ENCODE measurements at regions of chr10 and their contacts with region 1.

Region 1: DNA sequence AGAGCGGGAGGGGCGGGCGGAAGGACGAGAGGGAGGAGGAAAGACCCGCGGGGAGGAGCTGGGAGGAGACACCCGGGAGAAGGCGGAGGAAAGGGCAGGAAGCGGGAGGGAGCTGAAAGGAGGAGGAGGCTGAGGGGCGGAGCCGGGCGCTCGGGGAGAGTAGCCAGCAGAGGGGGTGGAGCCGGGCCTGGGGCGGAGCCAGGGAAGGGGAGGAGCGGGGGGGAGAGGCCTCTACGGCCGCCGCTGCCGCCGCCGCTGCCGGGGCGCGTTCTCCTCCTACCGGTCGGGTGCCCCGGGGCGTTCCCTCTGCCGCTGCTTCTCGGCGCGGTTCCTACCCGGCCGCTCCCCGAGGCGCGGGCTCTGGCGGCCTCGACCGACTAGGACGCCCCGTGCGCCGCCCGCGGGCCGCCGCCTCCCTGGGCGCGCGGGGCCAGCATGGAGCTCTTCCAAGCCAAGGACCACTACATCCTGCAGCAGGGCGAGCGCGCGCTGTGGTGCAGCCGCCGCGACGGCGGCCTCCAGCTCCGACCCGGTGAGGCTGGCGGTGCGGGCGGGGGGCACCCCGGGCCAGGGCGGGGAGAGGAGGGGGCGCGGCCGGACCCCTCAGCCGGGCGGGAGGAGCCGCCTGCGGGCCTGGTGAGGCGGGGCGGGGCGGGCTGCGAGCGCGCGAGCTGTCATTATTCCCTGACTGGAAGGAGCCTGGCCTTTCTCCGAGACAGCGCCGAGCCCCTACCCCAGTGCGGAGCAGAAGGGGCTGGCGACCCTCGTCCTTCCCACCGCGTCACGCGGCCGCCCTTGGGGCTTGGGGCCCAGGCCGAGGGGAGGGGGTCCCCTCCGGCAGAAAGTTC is at the start of gene INPP5F:
- DNase-seq: peak; percentile 96 to 100 (median 99)
- ATAC-seq: peak; percentile 91
- H3K4me3 ChIP-seq: peak within 1 kb of the TSS; percentile 79
- H3K4me3 Mint-ChIP-seq: peak within 1 kb of the TSS; percentile 88
- H3K27ac ChIP-seq: peak within 1 kb of the TSS; percentile 53 to 59
- H3K27ac Mint-ChIP-seq: peak within 1 kb of the TSS; percentile 77
- H3K4me1 ChIP-seq: peaks cover 22% of the 10 kb centered on the region
- H3K4me1 Mint-ChIP-seq: peaks cover 30% of the 10 kb centered on the region
- H3K27me3 ChIP-seq: no peaks in the 10 kb centered on the region
- H3K27me3 Mint-ChIP-seq: no peaks in the 10 kb centered on the region
- CTCF ChIP-seq: peak; percentile 17
- total RNA-seq, gene INPP5F: 6.2 to 6.4 TPM

Region 2: DNA sequence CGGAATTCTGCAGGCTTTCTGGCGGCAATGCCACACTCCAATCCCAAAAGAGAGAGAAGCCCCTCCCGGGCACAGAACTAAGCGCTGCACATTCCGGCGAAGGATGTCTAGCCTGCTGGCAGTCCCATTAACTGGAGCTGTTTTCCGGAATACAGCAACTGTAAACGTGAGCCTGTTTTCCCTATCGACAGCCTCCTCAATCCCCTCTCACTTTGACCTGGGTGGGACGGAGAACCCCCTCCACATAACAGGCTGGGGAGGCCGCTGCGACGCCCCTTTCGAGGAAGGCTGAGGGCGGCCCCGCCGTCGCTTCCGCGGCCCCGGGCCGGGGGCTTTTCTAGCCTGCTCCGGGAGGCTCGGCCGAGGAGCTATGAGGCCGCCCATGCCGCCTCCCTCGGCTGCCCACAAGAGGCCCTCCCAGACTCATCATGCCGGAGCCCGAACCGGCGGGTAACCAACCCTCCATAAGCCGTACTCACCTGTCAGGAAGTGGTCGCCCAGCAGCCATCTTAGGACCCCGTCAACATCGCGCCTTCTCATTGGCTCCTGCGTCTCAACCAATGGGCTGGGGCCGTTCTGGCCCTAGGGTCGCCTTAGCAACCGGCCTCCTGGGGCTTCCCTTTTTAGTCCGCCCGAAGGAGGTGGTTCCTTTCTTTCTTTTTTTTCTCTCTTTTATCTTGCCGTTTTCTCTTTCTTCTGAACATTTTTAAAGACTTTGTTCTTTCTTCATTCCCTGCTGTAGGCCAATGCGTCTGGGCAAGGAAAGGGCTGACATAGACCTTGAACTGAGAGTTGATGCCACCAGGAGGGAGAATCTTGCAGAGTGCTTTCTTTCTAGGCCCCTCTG is 1384.0 kb before region 1 on chr10 and contains the start of gene FAM204A:
- CTCF ChIA-PET with region 1: no interaction called
- POLR2A ChIA-PET with region 1: no interaction called
- intact Hi-C with region 1: loop called in 1 of 2 experiments (anchors 5 kb)
- DNase-seq: peak; percentile 92 to 99 (median 95)
- ATAC-seq: peak; percentile 96
- H3K4me3 ChIP-seq: peak within 1 kb of the TSS; percentile 98
- H3K4me3 Mint-ChIP-seq: peak within 1 kb of the TSS; percentile 99
- H3K27ac ChIP-seq: peak within 1 kb of the TSS; percentile 36 to 58
- H3K27ac Mint-ChIP-seq: peak within 1 kb of the TSS; percentile 88
- H3K4me1 ChIP-seq: peaks cover 21% of the 10 kb centered on the region
- H3K4me1 Mint-ChIP-seq: peaks cover 58% of the 10 kb centered on the region
- H3K27me3 ChIP-seq: no peaks in the 10 kb centered on the region
- H3K27me3 Mint-ChIP-seq: no peaks in the 10 kb centered on the region
- CTCF ChIP-seq: no peak
- total RNA-seq, gene FAM204A: 47.3 to 54.7 TPM

Region 3: GRCh38 chr10:119178372-119179119 is 547.5 kb before region 1 on chr10 and contains the start of gene PRDX3:
- CTCF ChIA-PET with region 1: no interaction called
- POLR2A ChIA-PET with region 1: interaction called, 4 read pairs
- intact Hi-C with region 1: loop called in 1 of 2 experiments (anchors 2 kb)
- DNase-seq: peak; percentile 85 to 96 (median 91)
- ATAC-seq: peak; percentile 97
- H3K4me3 ChIP-seq: peak within 1 kb of the TSS; percentile 93
- H3K4me3 Mint-ChIP-seq: peak within 1 kb of the TSS; percentile 98
- H3K27ac ChIP-seq: peak within 1 kb of the TSS; percentile 71 to 80
- H3K27ac Mint-ChIP-seq: peak within 1 kb of the TSS; percentile 95
- H3K4me1 ChIP-seq: peaks cover 32% of the 10 kb centered on the region
- H3K4me1 Mint-ChIP-seq: peaks cover 35% of the 10 kb centered on the region
- H3K27me3 ChIP-seq: no peaks in the 10 kb centered on the region
- H3K27me3 Mint-ChIP-seq: no peaks in the 10 kb centered on the region
- CTCF ChIP-seq: peak; percentile 19
- total RNA-seq, gene PRDX3: 7.1 to 7.5 TPM

Region 4: DNA sequence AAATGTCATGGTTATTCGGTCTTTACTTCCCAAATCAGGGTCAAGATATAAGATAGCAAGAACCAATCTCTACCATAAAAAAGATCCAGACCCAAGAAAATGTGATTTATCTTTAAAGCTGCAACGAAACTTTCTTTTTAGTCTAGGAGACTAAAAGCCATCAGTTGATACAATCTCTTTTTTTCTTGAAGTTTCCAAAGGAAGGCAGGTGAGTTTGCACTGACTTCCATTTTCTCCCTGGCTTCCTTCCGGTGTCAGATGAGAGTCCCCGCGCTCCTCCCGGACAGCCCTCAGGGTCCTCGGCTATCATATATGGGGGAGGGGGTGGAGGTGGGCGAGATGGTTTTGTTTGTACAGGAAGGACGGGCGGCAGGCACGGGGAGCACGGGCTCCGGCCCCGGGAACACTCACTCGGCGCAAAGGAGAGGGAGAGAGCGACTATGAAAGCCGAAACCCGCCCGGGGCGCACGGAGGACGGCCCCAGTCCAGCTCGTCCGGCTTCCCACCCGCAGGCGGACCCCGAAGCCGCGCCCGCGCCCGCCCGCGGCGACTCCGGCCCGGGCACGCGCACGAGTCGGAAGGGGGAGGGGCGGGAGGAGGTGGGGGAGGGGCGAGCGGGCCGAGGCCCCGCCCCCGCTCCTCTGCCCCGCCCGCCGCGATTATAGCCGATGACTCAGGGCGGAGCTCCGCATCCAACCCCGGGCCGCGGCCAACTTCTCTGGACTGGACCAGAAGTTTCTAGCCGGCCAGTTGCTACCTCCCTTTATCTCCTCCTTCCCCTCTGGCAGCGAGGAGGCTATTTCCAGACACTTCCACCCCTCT is 75.1 kb before region 1 on chr10 and contains the start of gene BAG3:
- CTCF ChIA-PET with region 1: no interaction called
- POLR2A ChIA-PET with region 1: interaction called, 15 read pairs
- intact Hi-C with region 1: loop called (anchors 2 kb)
- DNase-seq: peak; percentile 60 to 89 (median 76)
- ATAC-seq: peak; percentile 52
- H3K4me3 ChIP-seq: peak within 1 kb of the TSS; percentile 72
- H3K4me3 Mint-ChIP-seq: peak within 1 kb of the TSS; percentile 100
- H3K27ac ChIP-seq: peak within 1 kb of the TSS; percentile 77 to 88
- H3K27ac Mint-ChIP-seq: peak within 1 kb of the TSS; percentile 99
- H3K4me1 ChIP-seq: peaks cover 27% of the 10 kb centered on the region
- H3K4me1 Mint-ChIP-seq: peaks cover 49% of the 10 kb centered on the region
- H3K27me3 ChIP-seq: no peaks in the 10 kb centered on the region
- H3K27me3 Mint-ChIP-seq: no peaks in the 10 kb centered on the region
- CTCF ChIP-seq: no peak
- total RNA-seq, gene BAG3: 65.1 to 65.8 TPM

Region 5: GRCh38 chr10:119686439-119687191 is 39.4 kb before region 1 on chr10:
- CTCF ChIA-PET with region 1: interaction called, 20 read pairs
- POLR2A ChIA-PET with region 1: interaction called, 8 read pairs
- intact Hi-C with region 1: loop called in 1 of 2 experiments (anchors 2 kb)
- DNase-seq: peak; percentile 68 to 93 (median 80)
- ATAC-seq: peak; percentile 88
- H3K4me3 ChIP-seq: peak overlapping the region; percentile 44
- H3K4me3 Mint-ChIP-seq: peak overlapping the region; percentile 71
- H3K27ac ChIP-seq: no peak overlapping the region
- H3K27ac Mint-ChIP-seq: peak overlapping the region; percentile 60
- H3K4me1 ChIP-seq: peaks cover 13% of the 10 kb centered on the region
- H3K4me1 Mint-ChIP-seq: peaks cover 23% of the 10 kb centered on the region
- H3K27me3 ChIP-seq: no peaks in the 10 kb centered on the region
- H3K27me3 Mint-ChIP-seq: no peaks in the 10 kb centered on the region
- CTCF ChIP-seq: peak; percentile 99

Region 6: DNA sequence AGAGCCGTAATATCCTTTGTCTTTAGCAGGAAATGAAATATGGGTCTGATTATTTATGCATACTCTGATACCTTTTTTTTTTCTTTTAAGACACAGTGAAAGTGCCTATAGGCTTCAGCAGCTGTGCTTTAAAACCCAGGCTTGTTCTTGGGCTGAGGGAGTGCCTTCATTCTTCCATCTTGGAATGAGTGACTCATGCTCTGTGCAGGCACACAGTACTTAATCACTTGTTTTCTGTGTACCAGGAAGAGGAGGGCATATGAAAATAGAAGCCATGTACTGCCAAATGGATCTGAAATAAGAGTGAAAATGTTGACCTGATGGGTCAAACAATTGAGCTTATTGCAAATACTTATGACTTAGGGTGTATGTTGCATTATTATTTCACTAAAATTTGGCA is 11.8 kb after region 1 on chr10:
- CTCF ChIA-PET with region 1: interaction called, 9 read pairs
- POLR2A ChIA-PET with region 1: interaction called, 36 read pairs
- intact Hi-C with region 1: no loop called
- DNase-seq: peak in 2 of 14 experiments; percentile 26 to 31
- ATAC-seq: peak; percentile 85
- H3K4me3 ChIP-seq: no peak overlapping the region
- H3K4me3 Mint-ChIP-seq: peak overlapping the region; percentile 42
- H3K27ac ChIP-seq: no peak overlapping the region
- H3K27ac Mint-ChIP-seq: peak overlapping the region; percentile 61
- H3K4me1 ChIP-seq: peaks cover 16% of the 10 kb centered on the region
- H3K4me1 Mint-ChIP-seq: peaks cover 45% of the 10 kb centered on the region
- H3K27me3 ChIP-seq: no peaks in the 10 kb centered on the region
- H3K27me3 Mint-ChIP-seq: no peaks in the 10 kb centered on the region
- CTCF ChIP-seq: no peak

Region 7: GRCh38 chr10:119872860-119873681 is 147.0 kb after region 1 on chr10:
- CTCF ChIA-PET with region 1: no interaction called
- POLR2A ChIA-PET with region 1: interaction called, 36 read pairs
- intact Hi-C with region 1: loop called in 1 of 2 experiments (anchors 1 kb)
- DNase-seq: peak; percentile 78 to 96 (median 86)
- ATAC-seq: peak; percentile 90
- H3K4me3 ChIP-seq: peak overlapping the region; percentile 80
- H3K4me3 Mint-ChIP-seq: peak overlapping the region; percentile 93
- H3K27ac ChIP-seq: peak overlapping the region; percentile 78 to 87
- H3K27ac Mint-ChIP-seq: peak overlapping the region; percentile 94
- H3K4me1 ChIP-seq: peaks cover 37% of the 10 kb centered on the region
- H3K4me1 Mint-ChIP-seq: peaks cover 35% of the 10 kb centered on the region
- H3K27me3 ChIP-seq: no peaks in the 10 kb centered on the region
- H3K27me3 Mint-ChIP-seq: no peaks in the 10 kb centered on the region
- CTCF ChIP-seq: no peak

Measured in CD4-positive, alpha-beta T cell (primary cell).